PC-3 (cell line): ENCODE measurements at regions of chr2 and their contacts with region 1.

Region 1: GRCh38 chr2:190408538-190409271 is 550 bp downstream of the MFSD6 start:
- DNase-seq: peak; percentile 44
- ATAC-seq: peak; percentile 59
- H3K4me3 ChIP-seq: peak overlapping the region; percentile 96
- H3K27ac ChIP-seq: 0 out of 2 replicates have a peak overlapping the region, but pooled peaks have one; percentile 7
- H3K4me1 ChIP-seq: peaks cover 20% of the 10 kb centered on the region
- H3K27me3 ChIP-seq: no peaks in the 10 kb centered on the region
- CTCF ChIP-seq: no peak

Region 2: GRCh38 chr2:190468814-190469569 is 60.3 kb after region 1 on chr2:
- CTCF ChIA-PET with region 1: no interaction called
- POLR2A ChIA-PET with region 1: no interaction called
- intact Hi-C with region 1: loop called (anchors 5 kb)
- DNase-seq: peak; percentile 98
- ATAC-seq: peak; percentile 81
- H3K4me3 ChIP-seq: no peak overlapping the region
- H3K27ac ChIP-seq: peak overlapping the region; percentile 89
- H3K4me1 ChIP-seq: peaks cover 40% of the 10 kb centered on the region
- H3K27me3 ChIP-seq: no peaks in the 10 kb centered on the region
- CTCF ChIP-seq: no peak